Activated CD4-positive, alpha-beta T cell treated with anti-CD3 and anti-CD28 coated beads, Interleukin-2, amount 10 ng/mL, durations not matched to agents 24 days and 14 days (primary cell): ENCODE measurements at regions of chr18 and their contacts with region 1.

Region 1: GRCh38 chr18:24014062-24014985 is at the start of gene TTC39C:
- DNase-seq: peak; percentile 95
- H3K4me3 Mint-ChIP-seq: peak within 1 kb of the TSS; percentile 94
- H3K27ac Mint-ChIP-seq: peak within 1 kb of the TSS; percentile 93
- H3K4me1 Mint-ChIP-seq: peaks cover 74% of the 10 kb centered on the region
- H3K27me3 Mint-ChIP-seq: no peaks in the 10 kb centered on the region
- total RNA-seq, gene TTC39C: 28.8 and 29.2 TPM in 2 replicates

Region 2: GRCh38 chr18:23503038-23503962 is 511.0 kb before region 1 on chr18 and contains the start of gene RMC1:
- intact Hi-C with region 1: loop called (anchors 5 kb)
- DNase-seq: peak; percentile 99
- H3K4me3 Mint-ChIP-seq: peak within 1 kb of the TSS; percentile 87
- H3K27ac Mint-ChIP-seq: peak within 1 kb of the TSS; percentile 91
- H3K4me1 Mint-ChIP-seq: peaks cover 51% of the 10 kb centered on the region
- H3K27me3 Mint-ChIP-seq: no peaks in the 10 kb centered on the region
- total RNA-seq, gene RMC1: 51.0 and 52.8 TPM in 2 replicates

Region 3: GRCh38 chr18:23684515-23685197 is 329.7 kb before region 1 on chr18:
- intact Hi-C with region 1: no loop called
- DNase-seq: no peak
- H3K4me3 Mint-ChIP-seq: no peak overlapping the region
- H3K27ac Mint-ChIP-seq: no peak overlapping the region
- H3K4me1 Mint-ChIP-seq: peaks cover 4% of the 10 kb centered on the region
- H3K27me3 Mint-ChIP-seq: peaks cover 64% of the 10 kb centered on the region

Region 4: GRCh38 chr18:23812546-23813440 is 201.5 kb before region 1 on chr18:
- intact Hi-C with region 1: loop called (anchors 5 kb)
- DNase-seq: no peak
- H3K4me3 Mint-ChIP-seq: no peak overlapping the region
- H3K27ac Mint-ChIP-seq: no peak overlapping the region
- H3K4me1 Mint-ChIP-seq: peaks cover 20% of the 10 kb centered on the region
- H3K27me3 Mint-ChIP-seq: peaks cover 28% of the 10 kb centered on the region

Region 5: GRCh38 chr18:23943104-23943503 is 71.2 kb before region 1 on chr18:
- intact Hi-C with region 1: loop called (anchors 2 kb)
- DNase-seq: peak; percentile 85
- H3K4me3 Mint-ChIP-seq: peak overlapping the region; percentile 56
- H3K27ac Mint-ChIP-seq: peak overlapping the region; percentile 2
- H3K4me1 Mint-ChIP-seq: peaks cover 40% of the 10 kb centered on the region
- H3K27me3 Mint-ChIP-seq: peaks cover 38% of the 10 kb centered on the region

Region 6: DNA sequence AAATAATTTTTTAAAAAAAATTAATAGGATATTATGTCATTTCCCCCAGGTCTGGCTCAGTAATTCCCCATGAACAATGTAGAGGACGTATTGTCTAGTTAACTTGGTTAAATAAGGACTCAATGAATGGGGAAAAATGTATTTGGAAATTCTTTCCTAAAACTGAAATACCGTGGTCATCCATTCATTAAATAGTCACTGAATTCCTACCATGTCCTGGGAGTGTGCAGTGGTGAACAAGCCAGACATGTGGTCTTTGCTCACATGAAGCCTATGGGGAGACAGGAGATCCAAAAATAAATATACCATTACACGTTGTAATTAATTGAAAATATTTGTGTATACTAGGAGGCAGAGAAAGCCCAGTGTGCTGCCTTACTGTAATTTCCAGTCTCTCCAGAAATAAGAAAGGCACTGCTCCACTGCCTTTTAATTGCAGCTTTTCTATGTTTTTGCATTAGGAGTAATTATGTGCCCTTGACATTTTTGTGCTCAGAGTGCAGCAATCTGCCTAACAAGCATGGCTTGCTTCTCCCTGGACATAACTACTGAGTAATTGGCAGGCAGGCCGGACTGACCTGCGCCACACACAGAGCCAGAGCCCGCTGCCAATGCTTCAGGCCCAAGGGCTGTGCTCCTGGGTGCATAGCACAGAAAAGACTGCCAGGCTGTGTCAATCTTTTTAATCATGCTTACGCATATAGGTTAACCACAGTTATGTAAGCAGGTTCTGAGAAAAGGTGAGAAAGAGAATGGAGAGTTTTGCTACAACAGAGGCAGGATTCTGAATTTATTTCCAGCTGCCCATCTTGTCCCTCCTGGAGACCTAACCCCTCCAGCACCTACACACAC is 22.0 kb before region 1 on chr18:
- intact Hi-C with region 1: loop called (anchors 2 kb)
- DNase-seq: peak; percentile 82
- H3K4me3 Mint-ChIP-seq: peak overlapping the region; percentile 51
- H3K27ac Mint-ChIP-seq: peak overlapping the region; percentile 56
- H3K4me1 Mint-ChIP-seq: peaks cover 23% of the 10 kb centered on the region
- H3K27me3 Mint-ChIP-seq: peaks cover 4% of the 10 kb centered on the region

Region 7: GRCh38 chr18:24368749-24369148 is 354.4 kb after region 1 on chr18:
- intact Hi-C with region 1: loop called (anchors 2 kb)
- DNase-seq: peak; percentile 78
- H3K4me3 Mint-ChIP-seq: peak overlapping the region; percentile 28
- H3K27ac Mint-ChIP-seq: peak overlapping the region; percentile 75
- H3K4me1 Mint-ChIP-seq: peaks cover 39% of the 10 kb centered on the region
- H3K27me3 Mint-ChIP-seq: no peaks in the 10 kb centered on the region